SK-N-SH (cell line): ENCODE measurements at regions of chr5 and their contacts with region 1.

Region 1: DNA sequence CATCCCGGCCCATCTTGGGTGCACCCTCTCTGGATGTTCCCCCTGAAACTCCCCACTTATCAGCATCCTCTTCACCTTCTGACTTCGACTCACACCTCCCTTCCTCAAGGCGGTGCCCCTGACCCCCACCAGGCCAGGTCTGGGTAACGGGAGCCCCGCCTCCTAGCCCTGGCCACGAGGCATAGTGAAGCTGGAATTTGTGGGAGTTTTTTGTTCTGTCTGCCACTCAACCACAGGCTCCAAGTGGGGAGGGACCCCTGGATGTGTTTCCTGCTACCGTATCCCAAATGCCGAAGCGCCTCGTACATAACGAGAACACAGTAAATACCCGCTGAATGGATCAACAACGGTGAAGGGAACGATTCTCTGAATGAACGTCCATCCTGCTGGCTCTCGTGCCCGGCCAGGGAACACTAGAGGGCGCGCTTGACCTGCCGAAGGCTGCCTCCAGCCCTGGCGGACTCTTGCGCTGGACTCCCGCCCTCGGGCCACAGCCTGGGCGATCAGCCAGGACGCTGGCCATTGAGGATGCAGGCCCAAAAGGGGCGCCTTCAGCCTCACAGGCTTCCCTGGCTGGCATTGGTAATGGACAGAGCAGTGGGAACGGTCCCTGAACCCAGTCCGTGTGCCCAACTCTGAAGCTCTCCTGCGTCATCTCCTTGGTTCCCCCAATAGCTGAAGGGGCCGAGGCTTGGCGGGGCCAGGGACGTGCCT is 47.3 kb upstream of the PHYKPL start:
- DNase-seq: peak; percentile 94
- H3K4me3 ChIP-seq: peak overlapping the region in 1 of 2 experiments; percentile 48; a peak in 1 of 4 replicates
- H3K27ac ChIP-seq: peak overlapping the region in 1 of 2 experiments; percentile 64; a peak in 1 of 4 replicates
- H3K4me1 ChIP-seq: peaks cover 0 to 26% of the 10 kb centered on the region in 2 experiments; a peak in 2 of 4 replicates
- H3K27me3 ChIP-seq: no peaks in the 10 kb centered on the region
- CTCF ChIP-seq: peak; percentile 32; the same call in 1 of the 2 replicates
- EP300 ChIP-seq: peak in 1 of 2 experiments; percentile 28; a peak in 1 of 4 replicates
- RAD21 ChIP-seq: peak; percentile 99

Region 2: GRCh38 chr5:178232124-178232919 is 47.6 kb before region 1 on chr5 and contains the start of gene PHYKPL:
- CTCF ChIA-PET with region 1: interaction called, 46 read pairs
- POLR2A ChIA-PET with region 1: no interaction called
- DNase-seq: peak; percentile 91
- H3K4me3 ChIP-seq: peak within 1 kb of the TSS; percentile 87
- H3K27ac ChIP-seq: peak within 1 kb of the TSS; percentile 56 to 86
- H3K4me1 ChIP-seq: peaks cover 11 to 33% of the 10 kb centered on the region in 2 experiments; a peak in 2 of 4 replicates
- H3K27me3 ChIP-seq: no peaks in the 10 kb centered on the region
- CTCF ChIP-seq: peak; percentile 27
- EP300 ChIP-seq: no peak
- RAD21 ChIP-seq: no peak
- polyA plus RNA-seq, gene PHYKPL: 46.8 and 61.3 TPM in 2 replicates

Region 3: GRCh38 chr5:178350361-178351220 is 70.7 kb after region 1 on chr5:
- CTCF ChIA-PET with region 1: interaction called, 14 read pairs
- POLR2A ChIA-PET with region 1: no interaction called
- DNase-seq: peak; percentile 64
- H3K4me3 ChIP-seq: no peak overlapping the region
- H3K27ac ChIP-seq: peak overlapping the region in 1 of 2 experiments; percentile 98; a peak in 2 of 4 replicates
- H3K4me1 ChIP-seq: peaks cover 0 to 51% of the 10 kb centered on the region in 2 experiments; a peak in 2 of 4 replicates
- H3K27me3 ChIP-seq: no peaks in the 10 kb centered on the region
- CTCF ChIP-seq: no peak
- EP300 ChIP-seq: no peak; a peak in 1 of 4 replicates
- RAD21 ChIP-seq: no peak

Region 4: DNA sequence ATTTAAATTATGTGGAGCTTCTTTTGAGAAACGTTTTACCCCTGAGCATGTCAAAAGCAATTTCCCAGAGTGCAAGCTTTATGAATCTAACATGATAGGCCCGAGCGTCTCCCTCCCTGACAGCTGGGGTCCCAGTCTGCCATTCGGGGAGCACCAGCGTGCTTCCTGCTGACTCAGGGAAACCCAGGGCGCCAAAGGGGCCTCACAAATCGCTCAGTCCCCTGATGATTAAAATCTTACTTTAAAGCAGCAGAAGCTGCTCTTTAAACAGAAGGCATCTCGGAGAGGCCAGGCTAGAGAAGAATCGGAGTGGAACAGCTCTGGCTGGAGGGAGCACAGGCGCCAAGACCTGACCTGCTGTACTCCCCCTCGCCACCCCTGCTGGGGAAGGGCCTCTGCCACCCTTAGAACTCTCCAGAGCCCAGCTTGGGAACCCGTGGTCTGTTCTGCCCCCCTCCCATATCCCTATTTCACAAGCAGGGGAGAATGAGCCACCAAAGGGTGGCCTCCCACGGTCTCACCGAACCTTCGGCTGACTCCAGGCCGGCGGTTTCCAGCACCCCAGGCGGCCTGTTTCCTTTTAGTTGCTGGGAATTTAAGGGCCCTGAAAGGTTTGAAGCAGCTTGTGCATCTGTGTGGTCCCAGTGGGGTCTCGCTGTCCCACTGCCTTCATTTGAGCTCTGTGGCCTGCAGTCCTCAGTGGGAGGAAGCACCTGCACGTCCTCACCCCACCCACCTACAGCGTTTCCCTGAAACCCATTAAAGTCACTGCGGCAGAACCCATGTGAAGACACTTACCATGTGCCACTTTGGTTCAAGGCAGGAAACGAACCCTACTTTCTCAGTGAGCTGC is 162.7 kb after region 1 on chr5:
- CTCF ChIA-PET with region 1: interaction called, 18 read pairs
- POLR2A ChIA-PET with region 1: no interaction called
- DNase-seq: no peak
- H3K4me3 ChIP-seq: no peak overlapping the region
- H3K27ac ChIP-seq: no peak overlapping the region; a peak in 1 of 4 replicates
- H3K4me1 ChIP-seq: peaks cover 0 to 25% of the 10 kb centered on the region in 2 experiments; a peak in 1 of 4 replicates
- H3K27me3 ChIP-seq: no peaks in the 10 kb centered on the region
- CTCF ChIP-seq: no peak
- EP300 ChIP-seq: no peak
- RAD21 ChIP-seq: no peak

Region 5: DNA sequence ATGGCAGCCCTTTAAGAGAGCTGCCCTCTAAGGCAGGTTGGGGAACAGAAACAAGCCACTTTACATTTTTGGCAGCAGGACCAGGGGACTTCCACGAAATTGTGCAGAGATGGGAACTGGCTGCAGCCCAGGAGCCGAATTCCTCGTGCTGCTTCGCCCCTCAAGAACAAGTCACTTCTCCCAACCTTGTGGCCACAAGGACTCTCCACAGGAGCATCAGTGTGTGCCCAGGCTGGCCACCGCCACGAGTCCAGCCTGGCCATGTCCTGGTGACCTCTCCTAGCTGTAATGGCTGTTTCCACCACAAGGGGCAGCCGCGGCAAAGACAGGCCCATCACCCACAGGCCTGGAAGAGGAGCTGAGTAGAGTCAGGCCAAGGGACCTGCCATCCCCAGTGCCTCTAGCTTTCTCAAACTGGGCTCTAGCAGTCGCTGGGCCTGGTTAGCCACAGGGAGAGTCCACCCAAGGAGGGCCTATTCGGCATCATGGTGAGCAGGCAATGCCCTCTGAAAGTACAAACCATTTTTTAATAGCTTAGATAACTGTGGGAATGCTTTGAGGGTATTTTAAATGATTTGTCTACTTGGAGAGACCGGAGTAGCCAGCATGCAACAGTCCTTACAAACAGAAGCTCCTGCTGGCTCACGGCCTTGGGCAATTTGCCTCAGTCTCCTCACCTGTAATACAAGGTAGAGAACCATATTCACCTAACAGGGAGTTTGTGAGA is 181.3 kb after region 1 on chr5:
- CTCF ChIA-PET with region 1: interaction called, 38 read pairs
- POLR2A ChIA-PET with region 1: no interaction called
- DNase-seq: peak; percentile 81
- H3K4me3 ChIP-seq: no peak overlapping the region
- H3K27ac ChIP-seq: peak overlapping the region in 1 of 2 experiments; percentile 82; a peak in 2 of 4 replicates
- H3K4me1 ChIP-seq: peaks cover 0 to 32% of the 10 kb centered on the region in 2 experiments; a peak in 1 of 4 replicates
- H3K27me3 ChIP-seq: no peaks in the 10 kb centered on the region
- CTCF ChIP-seq: peak; percentile 35; the same call in 1 of the 2 replicates
- EP300 ChIP-seq: no peak
- RAD21 ChIP-seq: peak; percentile 70

Region 6: GRCh38 chr5:178551059-178551458 is 271.2 kb after region 1 on chr5:
- CTCF ChIA-PET with region 1: interaction called, 61 read pairs
- POLR2A ChIA-PET with region 1: no interaction called
- DNase-seq: peak; percentile 54
- H3K4me3 ChIP-seq: no peak overlapping the region
- H3K27ac ChIP-seq: no peak overlapping the region; a peak in 1 of 4 replicates
- H3K4me1 ChIP-seq: peaks cover 0 to 29% of the 10 kb centered on the region in 2 experiments; a peak in 2 of 4 replicates
- H3K27me3 ChIP-seq: no peaks in the 10 kb centered on the region
- CTCF ChIP-seq: peak; percentile 45
- EP300 ChIP-seq: no peak
- RAD21 ChIP-seq: peak; percentile 66

Region 7: DNA sequence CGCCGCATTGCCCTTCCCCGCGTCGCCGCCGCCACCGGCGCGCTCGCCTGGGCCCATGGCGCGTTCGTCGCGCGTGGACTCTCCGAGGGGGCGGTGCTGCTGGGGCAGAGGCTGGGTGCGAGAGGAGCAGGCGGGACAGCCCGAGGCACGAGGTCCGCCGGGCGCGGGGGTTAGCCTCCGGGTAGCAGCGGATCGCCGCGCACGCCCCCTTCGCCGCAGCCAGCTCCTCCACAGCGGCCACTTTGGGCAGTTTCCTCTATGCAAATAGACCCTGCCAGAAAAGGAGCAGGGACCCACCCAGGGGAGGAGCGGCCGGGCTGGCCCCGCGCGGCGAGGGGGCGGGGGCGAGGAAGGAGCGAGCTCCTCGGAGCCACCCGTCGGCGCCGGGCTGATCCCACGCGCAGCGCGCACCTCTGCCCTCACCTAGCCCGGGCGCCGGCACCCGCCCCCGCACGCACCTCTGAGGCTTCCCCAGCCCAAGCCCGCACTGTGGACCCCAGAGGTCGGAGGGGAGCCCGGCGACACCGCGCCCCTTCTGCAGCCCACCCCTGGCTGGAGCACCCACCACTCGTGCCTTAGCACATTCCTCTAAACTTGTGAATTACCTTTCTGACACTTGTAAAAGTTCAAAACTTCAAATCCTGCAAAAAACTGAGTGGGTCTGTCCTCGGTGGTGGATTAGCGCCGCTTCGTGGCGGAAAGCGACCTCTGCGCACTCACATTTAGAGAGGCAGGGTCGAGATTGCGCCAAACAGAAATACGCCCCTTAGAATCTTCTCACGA is 310.4 kb after region 1 on chr5 and contains the start of gene COL23A1:
- CTCF ChIA-PET with region 1: interaction called, 265 read pairs
- POLR2A ChIA-PET with region 1: interaction called, 4 read pairs
- DNase-seq: peak; percentile 90
- H3K4me3 ChIP-seq: peak within 1 kb of the TSS; percentile 57 to 60; a peak in 3 of 4 replicates
- H3K27ac ChIP-seq: peak within 1 kb of the TSS in 1 of 2 experiments; percentile 65; a peak in 1 of 4 replicates
- H3K4me1 ChIP-seq: peaks cover 0 to 20% of the 10 kb centered on the region in 2 experiments; a peak in 1 of 4 replicates
- H3K27me3 ChIP-seq: no peaks in the 10 kb centered on the region; the same call in 1 of the 2 replicates
- CTCF ChIP-seq: peak; percentile 54
- EP300 ChIP-seq: no peak
- RAD21 ChIP-seq: peak; percentile 90
- polyA plus RNA-seq, gene COL23A1: 0.03 and 0.10 TPM in 2 replicates